ENCODE measurements at regions of chr14 and their contacts with region 1.

Region 1: GRCh38 chr14:73771848-73772638 is 57.9 kb upstream of the PNMA1 start:
- DNase-seq: peak; percentile 86
- ATAC-seq: peak; percentile 83
- H3K4me3 ChIP-seq: no peak overlapping the region
- H3K27ac ChIP-seq: 0 out of 2 replicates have a peak overlapping the region, but pooled peaks have one; percentile 9
- H3K4me1 ChIP-seq: peaks cover 23% of the 10 kb centered on the region
- H3K27me3 ChIP-seq: no peaks in the 10 kb centered on the region
- CTCF ChIP-seq: no peak
- POLR2A ChIP-seq: no peak
- RAD21 ChIP-seq: no peak

Region 2: DNA sequence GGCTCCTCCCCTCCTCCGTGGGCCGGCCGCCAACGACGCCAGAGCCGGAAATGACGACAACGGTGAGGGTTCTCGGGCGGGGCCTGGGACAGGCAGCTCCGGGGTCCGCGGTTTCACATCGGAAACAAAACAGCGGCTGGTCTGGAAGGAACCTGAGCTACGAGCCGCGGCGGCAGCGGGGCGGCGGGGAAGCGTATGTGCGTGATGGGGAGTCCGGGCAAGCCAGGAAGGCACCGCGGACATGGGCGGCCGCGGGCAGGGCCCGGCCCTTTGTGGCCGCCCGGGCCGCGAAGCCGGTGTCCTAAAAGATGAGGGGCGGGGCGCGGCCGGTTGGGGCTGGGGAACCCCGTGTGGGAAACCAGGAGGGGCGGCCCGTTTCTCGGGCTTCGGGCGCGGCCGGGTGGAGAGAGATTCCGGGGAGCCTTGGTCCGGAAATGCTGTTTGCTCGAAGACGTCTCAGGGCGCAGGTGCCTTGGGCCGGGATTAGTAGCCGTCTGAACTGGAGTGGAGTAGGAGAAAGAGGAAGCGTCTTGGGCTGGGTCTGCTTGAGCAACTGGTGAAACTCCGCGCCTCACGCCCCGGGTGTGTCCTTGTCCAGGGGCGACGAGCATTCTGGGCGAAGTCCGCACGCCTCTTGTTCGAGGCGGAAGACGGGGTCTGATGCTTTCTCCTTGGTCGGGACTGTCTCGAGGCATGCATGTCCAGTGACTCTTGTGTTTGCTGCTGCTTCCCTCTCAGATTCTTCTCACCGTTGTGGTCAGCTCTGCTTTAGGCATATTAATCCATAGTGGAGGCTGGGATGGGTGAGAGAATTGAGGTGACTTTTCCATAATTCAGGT is 635.4 kb before region 1 on chr14 and contains the start of gene PSEN1:
- CTCF ChIA-PET with region 1: no interaction called
- POLR2A ChIA-PET with region 1: no interaction called
- dilution Hi-C with region 1: no loop called
- in situ Hi-C with region 1: no loop called
- intact Hi-C with region 1: no loop called
- DNase-seq: peak; percentile 88
- ATAC-seq: peak; percentile 93
- H3K4me3 ChIP-seq: peak within 1 kb of the TSS; percentile 68
- H3K27ac ChIP-seq: peak within 1 kb of the TSS; percentile 53
- H3K4me1 ChIP-seq: peaks cover 4% of the 10 kb centered on the region
- H3K27me3 ChIP-seq: no peaks in the 10 kb centered on the region
- CTCF ChIP-seq: no peak
- POLR2A ChIP-seq: peak; percentile 96
- RAD21 ChIP-seq: no peak
- total RNA-seq, gene PSEN1: 62.7 and 66.4 TPM in 2 replicates

Region 3: GRCh38 chr14:73472185-73473114 is 299.6 kb before region 1 on chr14:
- CTCF ChIA-PET with region 1: no interaction called
- POLR2A ChIA-PET with region 1: no interaction called
- dilution Hi-C with region 1: no loop called
- in situ Hi-C with region 1: no loop called
- intact Hi-C with region 1: no loop called
- DNase-seq: peak; percentile 82
- ATAC-seq: peak; percentile 40
- H3K4me3 ChIP-seq: no peak overlapping the region
- H3K27ac ChIP-seq: no peak overlapping the region
- H3K4me1 ChIP-seq: peaks cover 7% of the 10 kb centered on the region
- H3K27me3 ChIP-seq: no peaks in the 10 kb centered on the region
- CTCF ChIP-seq: peak; percentile 85
- POLR2A ChIP-seq: no peak
- RAD21 ChIP-seq: peak; percentile 95

Region 4: GRCh38 chr14:73759714-73760597 is 12.1 kb before region 1 on chr14:
- CTCF ChIA-PET with region 1: no interaction called
- POLR2A ChIA-PET with region 1: no interaction called
- dilution Hi-C with region 1: no loop called
- in situ Hi-C with region 1: no loop called
- intact Hi-C with region 1: loop called (anchors 1 kb)
- DNase-seq: peak; percentile 99
- ATAC-seq: peak; percentile 85
- H3K4me3 ChIP-seq: peak overlapping the region; percentile 89
- H3K27ac ChIP-seq: peak overlapping the region; percentile 80
- H3K4me1 ChIP-seq: peaks cover 45% of the 10 kb centered on the region
- H3K27me3 ChIP-seq: no peaks in the 10 kb centered on the region
- CTCF ChIP-seq: no peak
- POLR2A ChIP-seq: peak; percentile 87
- RAD21 ChIP-seq: peak; percentile 35

Region 5: GRCh38 chr14:74038015-74038859 is 266.2 kb after region 1 on chr14:
- CTCF ChIA-PET with region 1: no interaction called
- POLR2A ChIA-PET with region 1: interaction called, 11 read pairs
- dilution Hi-C with region 1: no loop called
- in situ Hi-C with region 1: no loop called
- intact Hi-C with region 1: no loop called
- DNase-seq: peak; percentile 64
- ATAC-seq: peak; percentile 69
- H3K4me3 ChIP-seq: no peak overlapping the region
- H3K27ac ChIP-seq: no peak overlapping the region
- H3K4me1 ChIP-seq: no peaks in the 10 kb centered on the region
- H3K27me3 ChIP-seq: no peaks in the 10 kb centered on the region
- CTCF ChIP-seq: peak; percentile 64
- POLR2A ChIP-seq: no peak
- RAD21 ChIP-seq: peak; percentile 62

Measured in IMR-90 (cell line).